ENCODE measurements at regions of chr1 and their contacts with region 1.

Region 1: GRCh38 chr1:64948905-64949833 is 17.2 kb downstream of the JAK1 start:
- DNase-seq: peak in 5 of 9 experiments; percentile 30 to 65 (median 49)
- ATAC-seq: peak; percentile 91
- H3K4me3 ChIP-seq: no peak overlapping the region
- H3K4me3 Mint-ChIP-seq: peak overlapping the region; percentile 42
- H3K27ac ChIP-seq: peak overlapping the region in 1 of 2 experiments; percentile 24
- H3K27ac Mint-ChIP-seq: peak overlapping the region; percentile 75
- H3K4me1 ChIP-seq: peaks cover 71% of the 10 kb centered on the region
- H3K4me1 Mint-ChIP-seq: peaks cover 85% of the 10 kb centered on the region
- H3K27me3 ChIP-seq: no peaks in the 10 kb centered on the region
- H3K27me3 Mint-ChIP-seq: no peaks in the 10 kb centered on the region
- CTCF ChIP-seq: no peak

Region 2: GRCh38 chr1:64928325-64928724 is 20.8 kb before region 1 on chr1:
- CTCF ChIA-PET with region 1: interaction called, 3 read pairs
- POLR2A ChIA-PET with region 1: no interaction called
- intact Hi-C with region 1: loop called (anchors 2 kb)
- DNase-seq: no peak
- ATAC-seq: no peak
- H3K4me3 ChIP-seq: no peak overlapping the region
- H3K4me3 Mint-ChIP-seq: peak overlapping the region; percentile 30
- H3K27ac ChIP-seq: no peak overlapping the region
- H3K27ac Mint-ChIP-seq: no peak overlapping the region
- H3K4me1 ChIP-seq: peaks cover 62% of the 10 kb centered on the region
- H3K4me1 Mint-ChIP-seq: peaks cover 88% of the 10 kb centered on the region
- H3K27me3 ChIP-seq: no peaks in the 10 kb centered on the region
- H3K27me3 Mint-ChIP-seq: no peaks in the 10 kb centered on the region
- CTCF ChIP-seq: no peak

Region 3: DNA sequence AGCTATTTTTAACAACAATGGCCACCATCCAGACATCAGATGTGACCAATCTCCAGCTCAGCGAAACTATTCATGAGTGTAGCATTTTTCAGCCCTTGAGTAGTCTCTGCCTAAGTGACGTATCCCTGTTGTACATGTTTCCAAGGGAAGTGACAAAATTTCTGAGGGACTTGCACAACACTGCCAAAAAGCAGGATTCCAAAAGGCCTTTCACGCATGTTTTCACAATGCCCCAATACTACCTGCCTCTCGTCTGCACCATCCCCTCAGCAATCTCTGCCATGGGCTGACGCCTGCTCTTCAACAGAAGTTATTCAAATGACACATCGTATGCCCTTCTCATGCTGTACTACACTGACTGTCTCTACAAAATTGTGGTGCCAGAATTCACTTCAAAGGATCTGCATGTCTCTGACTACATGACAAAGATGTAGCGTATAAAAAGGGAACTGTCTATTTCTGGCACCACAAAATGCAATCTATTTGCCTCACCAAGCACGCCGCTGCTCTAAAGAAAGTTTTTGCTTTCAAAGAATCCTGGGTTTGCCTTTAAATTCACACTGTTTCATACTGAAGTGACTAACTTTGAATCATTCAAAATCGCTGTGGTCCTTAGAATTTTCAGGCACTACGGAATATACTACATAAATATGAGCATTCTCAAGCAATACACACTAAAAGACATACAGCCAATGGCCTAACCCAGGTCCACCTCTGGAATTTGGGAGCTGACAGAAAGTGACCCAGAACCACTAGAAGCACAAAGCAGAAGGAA is 15.7 kb before region 1 on chr1:
- CTCF ChIA-PET with region 1: interaction called, 5 read pairs
- POLR2A ChIA-PET with region 1: no interaction called
- intact Hi-C with region 1: loop called (anchors 2 kb)
- DNase-seq: peak in 2 of 9 experiments; percentile 36 to 49
- ATAC-seq: peak; percentile 82
- H3K4me3 ChIP-seq: no peak overlapping the region
- H3K4me3 Mint-ChIP-seq: peak overlapping the region; percentile 16
- H3K27ac ChIP-seq: peak overlapping the region in 1 of 2 experiments; percentile 5
- H3K27ac Mint-ChIP-seq: peak overlapping the region; percentile 38
- H3K4me1 ChIP-seq: peaks cover 57% of the 10 kb centered on the region
- H3K4me1 Mint-ChIP-seq: peaks cover 85% of the 10 kb centered on the region
- H3K27me3 ChIP-seq: no peaks in the 10 kb centered on the region
- H3K27me3 Mint-ChIP-seq: no peaks in the 10 kb centered on the region
- CTCF ChIP-seq: no peak

Measured in CD8-positive, alpha-beta T cell (primary cell).